Left cardiac atrium (tissue), 4 donors: ENCODE measurements at regions of chr18 and their contacts with region 1.

Region 1: DNA sequence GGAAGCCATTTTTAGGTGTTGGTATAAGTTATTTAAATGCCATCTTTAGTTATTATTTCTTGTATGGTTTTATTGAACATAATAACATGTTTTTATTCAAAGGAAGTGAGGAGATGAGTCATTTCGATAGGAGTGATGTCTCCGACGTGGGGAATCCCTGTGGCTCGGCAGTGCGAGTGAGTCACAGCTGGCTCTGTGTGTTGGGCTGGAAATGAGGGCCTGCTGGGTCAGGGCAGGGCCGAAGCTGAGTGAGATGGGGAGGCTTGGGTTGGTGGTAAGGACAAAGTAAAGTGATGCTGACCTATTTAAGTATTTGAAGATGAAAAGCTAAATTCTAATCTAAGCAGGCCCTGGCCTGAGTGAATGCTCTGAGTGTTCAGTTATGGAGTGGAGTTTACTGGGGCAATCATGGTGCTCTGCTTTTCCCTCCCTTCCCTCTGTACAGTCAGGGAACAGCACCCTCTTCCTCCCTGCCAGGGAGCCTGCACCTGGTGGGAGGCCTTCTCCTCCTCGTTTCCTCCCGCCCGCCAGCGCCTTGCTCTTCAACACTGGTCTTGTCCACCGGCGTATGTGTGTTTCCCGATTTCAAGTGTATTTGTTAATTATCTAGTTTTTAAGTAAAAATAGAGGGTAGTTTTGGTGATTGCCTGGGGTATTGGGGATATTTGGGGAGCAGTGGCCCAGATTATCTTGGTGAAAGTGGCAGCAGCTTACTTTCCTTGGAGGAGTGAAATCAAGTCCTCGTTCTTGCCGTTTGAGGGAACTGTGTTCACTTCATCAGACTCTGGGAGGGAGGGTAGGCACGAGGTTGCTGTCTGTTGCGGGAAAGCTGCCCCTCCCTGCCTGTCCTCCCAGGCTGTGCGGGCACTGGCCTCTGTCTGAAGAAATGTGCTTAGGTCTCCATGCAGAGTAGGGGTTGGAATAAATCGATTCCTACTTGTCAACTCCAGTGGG is 157.0 kb downstream of the LDLRAD4 start:
- DNase-seq: peak; percentile 89
- ATAC-seq: peak; percentile 72 to 95

Region 2: GRCh38 chr18:13232086-13232917 is 143.3 kb before region 1 on chr18:
- intact Hi-C with region 1: loop called (anchors 5 to 10 kb)
- DNase-seq: peak; percentile 77
- ATAC-seq: peak; percentile 75 to 77

Region 3: GRCh38 chr18:13279181-13280069 is 96.2 kb before region 1 on chr18:
- intact Hi-C with region 1: loop called in 1 of 2 experiments (anchors 10 kb)
- DNase-seq: no peak
- ATAC-seq: peak in 1 of 2 donors; percentile 15